WTC11 (cell line): ENCODE measurements at regions of chr19 and their contacts with region 1.

Region 1: GRCh38 chr19:56314562-56315077 is at the start of gene ZSCAN5A:
- DNase-seq: peak; percentile 92
- ATAC-seq: peak; percentile 80
- H3K4me3 Mint-ChIP-seq: peak within 1 kb of the TSS; percentile 95
- H3K27ac Mint-ChIP-seq: peak within 1 kb of the TSS; percentile 100
- H3K4me1 Mint-ChIP-seq: peaks cover 12% of the 10 kb centered on the region
- H3K27me3 Mint-ChIP-seq: no peaks in the 10 kb centered on the region
- CTCF ChIP-seq: no peak
- total RNA-seq, gene ZSCAN5A: 9.0 to 10.4 TPM (median 9.8 TPM) in 3 replicates

Region 2: DNA sequence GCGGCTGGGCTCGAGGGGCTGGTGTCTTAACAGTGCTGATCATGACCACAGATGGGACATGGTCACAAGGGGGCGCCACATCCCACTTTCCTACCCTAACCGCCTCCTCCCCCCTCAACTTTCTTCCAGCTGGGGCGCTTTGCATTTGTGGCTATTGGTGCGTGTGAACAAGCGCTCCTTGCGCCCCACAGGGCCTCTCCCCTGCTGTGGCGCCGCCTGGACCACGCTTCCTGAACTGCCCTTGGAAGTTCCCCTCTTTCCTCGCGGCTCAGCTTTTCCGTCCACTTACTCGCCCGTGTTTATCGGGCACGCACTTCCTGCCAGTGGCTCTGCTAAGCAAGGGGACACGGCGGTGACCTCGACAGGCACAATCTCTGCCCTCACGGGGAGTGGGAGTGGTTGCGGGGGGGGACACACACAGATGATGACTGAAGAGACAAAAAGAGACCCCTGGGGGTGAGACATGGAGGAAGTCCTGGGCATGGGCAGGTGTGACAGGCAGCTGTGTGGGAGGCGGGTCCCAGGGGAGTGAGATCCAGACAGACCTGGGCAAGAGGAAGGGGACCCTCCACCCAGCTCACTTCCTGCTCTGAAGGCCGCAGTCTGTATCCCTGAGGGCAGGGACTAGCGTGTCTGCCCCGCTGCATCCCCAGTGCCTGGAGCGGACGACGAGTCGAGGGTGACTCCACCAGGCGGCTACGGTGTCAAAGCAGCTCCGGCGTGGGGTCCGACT is 233.8 kb before region 1 on chr19:
- CTCF ChIA-PET with region 1: interaction called, 23 read pairs
- POLR2A ChIA-PET with region 1: no interaction called
- DNase-seq: peak; percentile 91
- ATAC-seq: peak; percentile 81
- H3K4me3 Mint-ChIP-seq: peak overlapping the region; percentile 85
- H3K27ac Mint-ChIP-seq: no peak overlapping the region
- H3K4me1 Mint-ChIP-seq: peaks cover 23% of the 10 kb centered on the region
- H3K27me3 Mint-ChIP-seq: peaks cover 15% of the 10 kb centered on the region
- CTCF ChIP-seq: peak; percentile 64

Region 3: GRCh38 chr19:56155124-56155687 is 159.4 kb before region 1 on chr19:
- CTCF ChIA-PET with region 1: interaction called, 19 read pairs
- POLR2A ChIA-PET with region 1: no interaction called
- DNase-seq: peak; percentile 78
- ATAC-seq: peak; percentile 70
- H3K4me3 Mint-ChIP-seq: no peak overlapping the region
- H3K27ac Mint-ChIP-seq: no peak overlapping the region
- H3K4me1 Mint-ChIP-seq: peaks cover 24% of the 10 kb centered on the region
- H3K27me3 Mint-ChIP-seq: no peaks in the 10 kb centered on the region
- CTCF ChIP-seq: peak; percentile 70

Region 4: DNA sequence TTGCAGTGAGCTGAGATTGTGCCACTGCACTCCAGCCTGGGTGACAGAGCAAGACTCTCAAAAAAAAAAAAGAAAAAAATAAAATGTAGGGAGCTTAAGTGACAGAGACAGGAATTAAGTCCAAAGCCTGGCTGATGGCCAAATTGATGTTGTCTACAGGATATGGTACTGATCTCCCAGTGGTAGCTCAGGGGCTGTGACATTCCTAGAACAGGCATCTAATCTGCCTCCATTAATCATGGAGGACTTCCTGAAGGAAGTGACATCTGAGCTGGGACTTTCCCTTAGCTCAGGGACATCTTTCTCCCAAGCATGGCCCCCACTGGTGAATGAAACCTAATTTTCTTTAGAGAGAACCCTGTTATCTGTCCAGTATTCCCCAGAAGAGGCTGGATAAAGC is 53.5 kb before region 1 on chr19:
- CTCF ChIA-PET with region 1: interaction called, 12 read pairs
- POLR2A ChIA-PET with region 1: no interaction called
- DNase-seq: no peak
- ATAC-seq: no peak
- H3K4me3 Mint-ChIP-seq: no peak overlapping the region
- H3K27ac Mint-ChIP-seq: no peak overlapping the region
- H3K4me1 Mint-ChIP-seq: no peaks in the 10 kb centered on the region
- H3K27me3 Mint-ChIP-seq: no peaks in the 10 kb centered on the region
- CTCF ChIP-seq: no peak

Region 5: DNA sequence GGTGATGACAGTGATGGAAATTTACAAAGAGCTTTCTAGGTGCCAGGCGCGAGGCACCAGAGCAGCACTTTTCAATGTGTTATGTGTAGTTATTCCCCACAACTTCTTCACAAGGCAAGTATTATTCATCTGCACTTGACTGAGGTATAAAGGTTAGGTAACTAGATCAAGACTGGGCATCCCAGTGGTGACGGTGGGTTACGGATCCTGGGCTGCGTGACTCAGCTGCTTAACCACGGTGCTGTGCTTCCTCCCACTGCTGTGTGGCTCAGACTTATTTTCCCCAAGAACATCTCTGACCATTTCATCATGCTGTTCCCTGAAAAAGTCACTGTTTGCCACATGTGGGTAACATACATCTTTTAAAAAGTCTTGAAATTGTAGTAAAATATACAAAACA is 22.8 kb before region 1 on chr19:
- CTCF ChIA-PET with region 1: interaction called, 13 read pairs
- POLR2A ChIA-PET with region 1: no interaction called
- DNase-seq: no peak
- ATAC-seq: no peak
- H3K4me3 Mint-ChIP-seq: no peak overlapping the region
- H3K27ac Mint-ChIP-seq: no peak overlapping the region
- H3K4me1 Mint-ChIP-seq: peaks cover 3% of the 10 kb centered on the region; the same call in 1 of the 2 replicates
- H3K27me3 Mint-ChIP-seq: no peaks in the 10 kb centered on the region
- CTCF ChIP-seq: no peak

Region 6: GRCh38 chr19:56348289-56348877 is 33.8 kb after region 1 on chr19:
- CTCF ChIA-PET with region 1: interaction called, 43 read pairs
- POLR2A ChIA-PET with region 1: no interaction called
- DNase-seq: peak; percentile 34
- ATAC-seq: 0 out of 2 replicates have a peak, but pooled peaks have one; percentile 30
- H3K4me3 Mint-ChIP-seq: no peak overlapping the region
- H3K27ac Mint-ChIP-seq: no peak overlapping the region
- H3K4me1 Mint-ChIP-seq: peaks cover 43% of the 10 kb centered on the region
- H3K27me3 Mint-ChIP-seq: no peaks in the 10 kb centered on the region
- CTCF ChIP-seq: peak; percentile 56

Region 7: GRCh38 chr19:56423276-56423984 is 108.8 kb after region 1 on chr19:
- CTCF ChIA-PET with region 1: no interaction called
- POLR2A ChIA-PET with region 1: no interaction called
- DNase-seq: no peak
- ATAC-seq: no peak
- H3K4me3 Mint-ChIP-seq: no peak overlapping the region
- H3K27ac Mint-ChIP-seq: no peak overlapping the region
- H3K4me1 Mint-ChIP-seq: no peaks in the 10 kb centered on the region
- H3K27me3 Mint-ChIP-seq: peaks cover 19% of the 10 kb centered on the region
- CTCF ChIP-seq: no peak